T-cell (primary cell): ENCODE measurements at regions of chr4 and their contacts with region 1.

Region 1: GRCh38 chr4:67545199-67546003 is at the start of gene CENPC:
- DNase-seq: peak; percentile 79 to 95 (median 89)
- ATAC-seq: peak; percentile 90 to 95 (median 94)
- H3K4me3 ChIP-seq: peak within 1 kb of the TSS; percentile 89 to 93
- H3K4me3 Mint-ChIP-seq: peak within 1 kb of the TSS; percentile 96 to 98 (median 98)
- H3K27ac ChIP-seq: peak within 1 kb of the TSS; percentile 98
- H3K27ac Mint-ChIP-seq: peak within 1 kb of the TSS; percentile 94 to 99
- H3K4me1 ChIP-seq: peaks cover 0 to 12% of the 10 kb centered on the region in 2 experiments
- H3K4me1 Mint-ChIP-seq: peaks cover 41 to 47% (median 43%) of the 10 kb centered on the region in 3 donors
- H3K27me3 ChIP-seq: no peaks in the 10 kb centered on the region
- H3K27me3 Mint-ChIP-seq: no peaks in the 10 kb centered on the region
- total RNA-seq, gene CENPC: 38.4 to 101 (median 40.0) TPM

Region 2: GRCh38 chr4:66863481-66863880 is 681.9 kb before region 1 on chr4:
- CTCF ChIA-PET with region 1: no interaction called
- POLR2A ChIA-PET with region 1: no interaction called
- DNase-seq: no peak
- ATAC-seq: no peak
- H3K4me3 ChIP-seq: no peak overlapping the region
- H3K4me3 Mint-ChIP-seq: no peak overlapping the region
- H3K27ac ChIP-seq: no peak overlapping the region
- H3K27ac Mint-ChIP-seq: no peak overlapping the region
- H3K4me1 ChIP-seq: no peaks in the 10 kb centered on the region
- H3K4me1 Mint-ChIP-seq: no peaks in the 10 kb centered on the region
- H3K27me3 ChIP-seq: no peaks in the 10 kb centered on the region
- H3K27me3 Mint-ChIP-seq: no peaks in the 10 kb centered on the region

Region 3: DNA sequence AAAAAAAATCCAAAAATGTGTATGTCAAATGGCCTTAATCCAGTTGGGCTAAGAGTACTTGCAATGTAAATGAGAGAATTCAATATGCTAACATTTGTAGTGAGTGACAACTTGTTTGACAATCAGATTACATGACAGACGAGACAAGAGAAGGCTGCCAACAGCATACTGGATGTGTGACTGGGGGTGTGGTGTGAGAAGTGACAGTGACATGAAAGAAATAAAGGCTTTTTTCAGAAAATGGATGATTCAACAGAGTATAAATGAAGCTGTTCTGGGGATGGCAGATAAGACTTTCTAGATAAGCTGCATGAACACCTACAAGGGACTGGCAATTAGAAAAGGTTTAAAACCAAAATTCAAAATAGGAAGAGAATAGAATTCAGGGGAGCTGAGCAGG is 143.5 kb before region 1 on chr4:
- CTCF ChIA-PET with region 1: no interaction called
- POLR2A ChIA-PET with region 1: no interaction called
- DNase-seq: no peak
- ATAC-seq: no peak
- H3K4me3 ChIP-seq: no peak overlapping the region
- H3K4me3 Mint-ChIP-seq: no peak overlapping the region
- H3K27ac ChIP-seq: no peak overlapping the region
- H3K27ac Mint-ChIP-seq: no peak overlapping the region
- H3K4me1 ChIP-seq: no peaks in the 10 kb centered on the region
- H3K4me1 Mint-ChIP-seq: no peaks in the 10 kb centered on the region
- H3K27me3 ChIP-seq: no peaks in the 10 kb centered on the region
- H3K27me3 Mint-ChIP-seq: no peaks in the 10 kb centered on the region

Region 4: GRCh38 chr4:67522851-67523671 is 22.3 kb before region 1 on chr4:
- CTCF ChIA-PET with region 1: interaction called in 1 of 2 experiments, 3 read pairs
- POLR2A ChIA-PET with region 1: interaction called in 1 of 2 experiments, 10 read pairs
- DNase-seq: peak in 1 of 35 experiments; percentile 34
- ATAC-seq: peak; percentile 40 to 70 (median 65)
- H3K4me3 ChIP-seq: no peak overlapping the region
- H3K4me3 Mint-ChIP-seq: peak overlapping the region in 1 of 3 donors; percentile 33
- H3K27ac ChIP-seq: no peak overlapping the region
- H3K27ac Mint-ChIP-seq: peak overlapping the region; percentile 59 to 66
- H3K4me1 ChIP-seq: peaks cover 2 to 24% of the 10 kb centered on the region in 2 experiments
- H3K4me1 Mint-ChIP-seq: peaks cover 69 to 75% (median 73%) of the 10 kb centered on the region in 3 donors
- H3K27me3 ChIP-seq: no peaks in the 10 kb centered on the region
- H3K27me3 Mint-ChIP-seq: no peaks in the 10 kb centered on the region

Region 5: DNA sequence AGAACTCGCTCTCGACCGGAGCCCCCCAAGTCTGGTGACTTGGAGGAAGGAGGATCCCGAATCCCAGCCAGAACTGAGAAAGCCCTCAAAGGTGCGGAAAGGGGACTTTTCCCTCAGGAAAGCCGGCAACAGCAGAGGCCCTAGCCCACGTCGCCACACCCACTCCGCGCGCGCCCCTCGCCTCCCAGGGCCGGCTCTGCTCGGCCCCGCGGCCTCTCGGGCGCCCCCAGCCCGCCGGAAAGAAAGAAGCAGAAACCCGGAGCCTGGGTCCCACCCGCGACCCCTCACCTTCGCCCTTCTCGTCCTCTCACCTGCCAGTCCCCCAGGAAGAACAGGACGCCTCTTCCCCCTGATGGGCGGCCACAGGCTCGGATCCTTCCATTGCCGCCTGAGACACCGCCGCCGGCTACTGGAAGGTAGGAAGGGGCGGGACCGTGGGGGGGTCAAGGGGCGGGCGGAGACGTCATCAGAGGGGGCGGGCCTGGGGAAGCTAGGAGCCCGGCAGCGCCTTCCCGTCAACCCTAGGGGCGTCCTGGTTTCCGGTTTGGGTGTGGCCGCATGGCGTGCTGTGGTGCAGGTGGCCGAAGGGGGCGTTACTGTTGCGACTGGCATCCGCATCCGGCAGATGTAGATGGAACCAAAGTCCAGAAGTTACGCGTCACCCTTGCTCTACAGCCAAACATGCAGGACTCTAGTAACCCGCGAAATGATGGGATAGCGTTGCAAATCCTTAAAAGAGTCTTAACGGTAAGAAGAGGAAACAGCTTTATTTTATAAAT is 155.5 kb after region 1 on chr4 and contains the start of gene UBA6:
- CTCF ChIA-PET with region 1: interaction called in 1 of 2 experiments, 9 read pairs
- POLR2A ChIA-PET with region 1: interaction called in 1 of 2 experiments, 13 read pairs
- DNase-seq: peak; percentile 83 to 96 (median 91)
- ATAC-seq: peak; percentile 98
- H3K4me3 ChIP-seq: peak within 1 kb of the TSS; percentile 88 to 95
- H3K4me3 Mint-ChIP-seq: peak within 1 kb of the TSS; percentile 96 to 97 (median 97)
- H3K27ac ChIP-seq: peak within 1 kb of the TSS; percentile 74
- H3K27ac Mint-ChIP-seq: peak within 1 kb of the TSS; percentile 94 to 98
- H3K4me1 ChIP-seq: peaks cover 16% of the 10 kb centered on the region in 2 experiments
- H3K4me1 Mint-ChIP-seq: peaks cover 67 to 71% (median 70%) of the 10 kb centered on the region in 3 donors
- H3K27me3 ChIP-seq: no peaks in the 10 kb centered on the region
- H3K27me3 Mint-ChIP-seq: no peaks in the 10 kb centered on the region
- total RNA-seq, gene UBA6: 42.3 to 48.4 (median 43.0) TPM